GM10248 (cell line): ENCODE measurements at regions of chr5 and their contacts with region 1.

Region 1: DNA sequence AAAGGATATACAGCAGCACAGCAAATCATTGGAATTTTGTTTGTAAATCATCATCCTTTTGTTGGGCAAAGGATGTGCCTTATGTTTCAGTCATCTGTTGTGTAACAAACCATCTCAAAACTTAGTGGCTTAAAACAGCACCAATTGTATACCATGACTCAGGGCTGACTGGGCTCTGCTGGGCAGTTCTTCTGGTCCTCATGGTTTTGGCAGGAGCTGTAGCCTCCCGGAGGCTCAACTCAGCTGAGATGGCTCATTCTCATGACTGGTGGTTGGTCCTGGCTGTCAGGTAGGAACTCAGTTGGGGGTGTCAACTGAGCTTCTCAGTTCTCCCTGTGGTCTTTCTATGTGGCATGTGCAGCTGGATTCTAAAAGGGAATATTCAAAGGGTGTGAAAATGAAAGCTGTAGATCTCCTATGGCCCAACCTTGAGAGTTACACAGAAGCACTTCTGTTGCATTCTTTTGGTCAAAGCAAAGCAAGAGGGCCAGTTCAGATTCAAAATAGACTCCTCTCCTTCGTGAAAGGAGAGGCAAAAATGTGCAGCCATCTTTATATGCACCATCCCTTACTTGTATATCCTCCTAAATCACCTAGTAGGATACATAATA is 39.1 kb upstream of the CPEB4 start:
- DNase-seq: no peak
- CTCF ChIP-seq: no peak

Region 2: GRCh38 chr5:173689737-173690360 is 159.2 kb before region 1 on chr5:
- CTCF ChIA-PET with region 1: no interaction called
- POLR2A ChIA-PET with region 1: no interaction called
- DNase-seq: peak; percentile 59
- CTCF ChIP-seq: no peak

Region 3: DNA sequence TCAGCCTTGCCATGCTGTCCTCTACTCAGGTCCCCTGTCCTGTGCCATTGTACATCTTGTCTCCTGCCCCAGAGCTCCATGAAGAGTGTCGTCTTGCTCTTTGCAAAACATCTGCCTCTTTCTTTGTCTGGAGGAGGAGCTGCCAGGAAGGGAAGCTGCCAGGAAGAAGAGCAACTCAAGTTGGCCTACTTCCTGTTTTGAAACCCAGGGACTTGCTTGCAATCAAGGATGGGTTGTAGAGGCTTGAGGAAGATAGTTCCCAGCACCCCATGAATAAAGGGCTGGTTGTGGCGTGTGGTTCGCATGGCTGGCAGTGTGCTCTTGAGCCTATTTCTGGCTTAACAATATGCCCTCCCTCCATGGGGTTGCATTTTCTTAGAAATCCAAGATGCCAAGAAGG is 14.0 kb before region 1 on chr5:
- CTCF ChIA-PET with region 1: interaction called, 10 read pairs
- POLR2A ChIA-PET with region 1: no interaction called
- DNase-seq: no peak
- CTCF ChIP-seq: no peak

Region 4: DNA sequence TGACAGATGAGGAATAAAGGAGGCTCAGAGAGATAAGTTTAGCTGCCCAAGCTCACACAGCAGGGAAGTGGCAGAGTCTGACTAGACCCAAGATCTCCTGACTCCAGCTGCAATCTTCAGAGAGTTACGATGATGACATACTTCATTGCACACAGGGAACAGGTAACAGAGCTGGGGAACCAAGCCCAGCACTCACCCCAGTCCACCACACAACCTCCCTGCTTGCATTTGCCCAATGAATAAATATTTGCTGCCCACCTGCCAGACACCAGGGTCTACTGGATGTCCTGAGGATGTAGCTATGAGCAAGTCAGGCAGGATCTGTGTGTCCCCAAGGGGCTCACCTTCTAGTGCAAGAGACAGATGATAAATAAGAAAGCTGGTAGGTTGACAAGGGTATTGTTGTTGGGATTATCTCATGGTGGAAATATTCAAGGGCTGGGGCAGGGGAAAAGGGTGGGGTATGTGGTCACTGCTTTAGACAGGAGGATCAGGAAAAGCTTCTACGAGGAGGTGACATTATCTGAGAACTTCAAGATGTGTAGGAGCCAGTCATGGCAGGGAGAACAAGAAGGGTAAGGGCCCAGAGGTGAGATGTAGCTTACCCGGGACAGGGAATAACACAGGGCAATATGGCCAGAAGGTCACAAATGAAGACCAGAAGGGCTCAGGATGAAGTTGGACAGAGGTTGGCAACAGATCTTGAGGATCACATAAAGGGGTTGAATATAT is 10.5 kb after region 1 on chr5:
- CTCF ChIA-PET with region 1: interaction called, 45 read pairs
- POLR2A ChIA-PET with region 1: no interaction called
- DNase-seq: no peak
- CTCF ChIP-seq: no peak

Region 5: DNA sequence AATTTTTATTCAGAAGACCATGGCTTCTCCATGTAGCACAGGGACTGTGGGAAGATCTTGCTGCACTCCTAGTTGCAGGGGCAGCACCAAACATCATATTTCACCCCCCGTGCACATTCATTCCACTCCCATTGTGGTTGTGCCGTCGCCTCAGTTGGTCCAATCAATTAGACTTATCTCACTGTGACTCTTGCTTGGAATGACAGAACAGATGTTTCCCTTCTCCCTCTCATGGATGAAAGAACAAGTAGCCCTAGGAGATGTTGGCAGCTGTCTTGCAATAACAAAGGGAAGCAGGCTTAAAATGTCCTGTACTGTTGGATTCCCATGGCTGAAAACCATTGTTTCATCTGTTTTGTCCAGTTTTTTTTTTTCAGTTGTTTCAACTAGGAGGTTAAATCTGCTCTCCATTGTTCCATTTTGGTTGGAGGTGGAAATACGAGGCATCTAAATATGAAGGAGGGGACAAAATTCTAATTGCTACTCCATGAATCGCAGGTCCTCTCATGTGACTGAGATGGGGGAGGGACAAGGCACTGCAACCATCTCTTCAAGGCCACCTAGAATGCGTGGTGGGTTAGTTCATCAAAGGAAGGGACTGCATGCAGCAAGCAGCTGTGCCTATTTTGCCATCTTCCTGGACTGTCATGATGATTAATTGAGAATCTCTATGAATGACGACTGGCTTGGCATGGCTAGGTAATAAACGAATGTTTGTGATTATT is 410.8 kb after region 1 on chr5:
- CTCF ChIA-PET with region 1: no interaction called
- POLR2A ChIA-PET with region 1: no interaction called
- DNase-seq: no peak
- CTCF ChIP-seq: no peak